B cell (primary cell): ENCODE measurements at regions of chr22 and their contacts with region 1.

Region 1: GRCh38 chr22:42090596-42091454 is at the start of gene NDUFA6:
- DNase-seq: peak; percentile 99
- ATAC-seq: peak; percentile 87
- H3K4me3 ChIP-seq: peak within 1 kb of the TSS; percentile 74 to 95 (median 91)
- H3K4me3 Mint-ChIP-seq: peak within 1 kb of the TSS; percentile 98
- H3K27ac ChIP-seq: peak within 1 kb of the TSS; percentile 89 to 96
- H3K27ac Mint-ChIP-seq: peak within 1 kb of the TSS; percentile 99
- H3K4me1 ChIP-seq: peaks cover 17 to 22% of the 10 kb centered on the region in 2 donors
- H3K4me1 Mint-ChIP-seq: peaks cover 31% of the 10 kb centered on the region
- H3K27me3 ChIP-seq: no peaks in the 10 kb centered on the region
- H3K27me3 Mint-ChIP-seq: no peaks in the 10 kb centered on the region
- CTCF ChIP-seq: peak; percentile 92
- total RNA-seq, gene NDUFA6: 47.8 and 51.5 TPM in 2 replicates

Region 2: DNA sequence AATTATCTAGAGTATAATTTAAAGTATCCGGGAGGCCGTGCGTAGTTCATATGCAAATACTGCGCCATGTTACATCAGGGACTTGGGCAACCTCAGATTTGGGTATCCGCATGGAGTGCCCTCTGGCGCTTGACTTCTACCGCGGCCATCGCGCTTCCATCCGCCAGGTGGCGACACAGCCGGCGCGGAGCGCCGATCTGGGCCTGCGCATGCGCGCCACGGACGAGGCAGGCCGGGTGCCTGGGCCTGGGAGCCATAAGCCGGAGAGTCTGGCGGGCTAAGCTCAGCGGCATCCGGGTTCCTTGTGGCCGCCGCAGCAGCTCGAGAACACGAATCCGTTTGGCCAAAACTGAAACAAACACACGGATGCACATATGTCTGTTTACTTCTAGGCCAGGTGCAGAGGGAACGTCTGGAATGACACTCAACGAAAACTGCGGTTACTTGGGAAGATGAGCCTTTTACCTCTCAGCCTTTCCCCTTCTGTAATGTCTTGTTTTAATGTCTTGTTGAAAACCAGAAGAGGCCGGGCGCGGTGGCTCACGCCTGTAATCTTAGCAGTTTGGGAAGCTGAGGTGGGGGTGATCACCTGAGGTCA is 424.1 kb before region 1 on chr22:
- CTCF ChIA-PET with region 1: no interaction called
- POLR2A ChIA-PET with region 1: no interaction called
- intact Hi-C with region 1: loop called (anchors 2 kb)
- DNase-seq: peak; percentile 95
- ATAC-seq: peak; percentile 96
- H3K4me3 ChIP-seq: peak overlapping the region in 4 of 5 experiments; percentile 24 to 64 (median 44)
- H3K4me3 Mint-ChIP-seq: peak overlapping the region; percentile 90
- H3K27ac ChIP-seq: peak overlapping the region; percentile 69 to 71
- H3K27ac Mint-ChIP-seq: peak overlapping the region; percentile 98
- H3K4me1 ChIP-seq: peaks cover 0 to 13% of the 10 kb centered on the region in 2 donors
- H3K4me1 Mint-ChIP-seq: peaks cover 7% of the 10 kb centered on the region
- H3K27me3 ChIP-seq: no peaks in the 10 kb centered on the region
- H3K27me3 Mint-ChIP-seq: no peaks in the 10 kb centered on the region
- CTCF ChIP-seq: peak; percentile 98

Region 3: DNA sequence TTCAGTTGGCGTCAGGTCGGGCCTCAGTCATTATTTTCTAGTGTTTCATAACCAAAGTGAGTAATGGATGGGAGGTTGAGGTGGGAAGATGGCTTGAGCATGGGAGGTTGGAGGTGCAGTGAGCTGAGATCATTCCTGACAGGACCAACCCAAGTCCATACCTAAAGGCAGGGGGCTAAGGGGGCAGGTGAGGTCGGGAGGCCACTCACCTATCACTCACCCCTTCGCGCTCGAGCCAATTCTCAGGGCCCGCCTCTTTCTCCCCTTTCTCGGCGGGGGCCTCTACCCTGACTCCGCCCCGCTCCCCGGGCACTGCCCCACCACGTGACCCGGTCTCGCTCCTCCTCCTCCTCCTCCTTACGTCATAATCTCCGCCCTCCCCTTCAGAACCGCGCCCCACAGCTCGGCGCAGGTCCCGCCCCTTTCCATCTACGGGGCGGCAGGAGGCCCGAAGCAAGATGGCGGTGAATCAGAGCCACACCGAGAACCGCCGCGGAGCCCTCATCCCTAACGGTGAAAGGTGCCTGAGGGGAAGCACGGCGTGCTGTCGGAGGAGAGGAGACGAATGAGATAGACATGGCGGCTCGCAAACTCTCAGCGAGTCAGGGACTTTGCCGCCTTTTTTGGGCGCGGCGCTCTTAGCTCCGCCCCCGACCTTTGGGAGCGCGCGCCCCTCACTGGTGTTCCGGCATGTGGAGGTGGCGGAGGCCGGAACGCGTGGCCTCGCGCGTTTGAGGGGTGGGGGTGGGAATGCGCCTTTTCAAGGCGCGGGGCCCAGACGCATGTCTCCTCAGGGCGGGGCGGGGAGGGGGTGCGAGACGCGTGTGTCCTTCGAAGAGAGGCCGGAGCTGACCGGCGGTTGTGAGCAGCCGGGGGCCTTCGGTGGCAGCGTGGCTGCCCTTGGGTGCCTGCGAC is 92.2 kb before region 1 on chr22 and contains the start of gene WBP2NL:
- CTCF ChIA-PET with region 1: interaction called, 6 read pairs
- POLR2A ChIA-PET with region 1: interaction called, 8 read pairs
- intact Hi-C with region 1: loop called (anchors 1 kb)
- DNase-seq: peak; percentile 95
- ATAC-seq: peak; percentile 100
- H3K4me3 ChIP-seq: peak within 1 kb of the TSS; percentile 36 to 88 (median 76)
- H3K4me3 Mint-ChIP-seq: peak within 1 kb of the TSS; percentile 99
- H3K27ac ChIP-seq: peak within 1 kb of the TSS; percentile 72 to 81
- H3K27ac Mint-ChIP-seq: peak within 1 kb of the TSS; percentile 99
- H3K4me1 ChIP-seq: peaks cover 15 to 23% of the 10 kb centered on the region in 2 donors
- H3K4me1 Mint-ChIP-seq: peaks cover 25% of the 10 kb centered on the region
- H3K27me3 ChIP-seq: peaks cover 0 to 10% (median 3%) of the 10 kb centered on the region in 4 experiments
- H3K27me3 Mint-ChIP-seq: no peaks in the 10 kb centered on the region
- CTCF ChIP-seq: no peak
- total RNA-seq, gene WBP2NL: 10.1 and 10.4 TPM in 2 replicates

Region 4: GRCh38 chr22:42114721-42115120 is 23.9 kb after region 1 on chr22:
- CTCF ChIA-PET with region 1: interaction called, 17 read pairs
- POLR2A ChIA-PET with region 1: no interaction called
- intact Hi-C with region 1: no loop called
- DNase-seq: no peak
- ATAC-seq: no peak
- H3K4me3 ChIP-seq: no peak overlapping the region
- H3K4me3 Mint-ChIP-seq: no peak overlapping the region
- H3K27ac ChIP-seq: no peak overlapping the region
- H3K27ac Mint-ChIP-seq: no peak overlapping the region
- H3K4me1 ChIP-seq: peaks cover 0 to under 1% of the 10 kb centered on the region in 2 donors
- H3K4me1 Mint-ChIP-seq: peaks cover 6% of the 10 kb centered on the region
- H3K27me3 ChIP-seq: no peaks in the 10 kb centered on the region
- H3K27me3 Mint-ChIP-seq: no peaks in the 10 kb centered on the region
- CTCF ChIP-seq: no peak

Region 5: GRCh38 chr22:42300259-42301076 is 209.6 kb after region 1 on chr22:
- CTCF ChIA-PET with region 1: no interaction called
- POLR2A ChIA-PET with region 1: no interaction called
- intact Hi-C with region 1: loop called (anchors 1 kb)
- DNase-seq: peak; percentile 79
- ATAC-seq: peak; percentile 91
- H3K4me3 ChIP-seq: peak overlapping the region in 4 of 5 experiments; percentile 46 to 61 (median 58)
- H3K4me3 Mint-ChIP-seq: peak overlapping the region; percentile 86
- H3K27ac ChIP-seq: peak overlapping the region; percentile 79 to 82
- H3K27ac Mint-ChIP-seq: peak overlapping the region; percentile 91
- H3K4me1 ChIP-seq: peaks cover 52 to 68% of the 10 kb centered on the region in 2 donors
- H3K4me1 Mint-ChIP-seq: peaks cover 51% of the 10 kb centered on the region
- H3K27me3 ChIP-seq: peaks cover 0 to 10% (median 2%) of the 10 kb centered on the region in 4 experiments
- H3K27me3 Mint-ChIP-seq: peaks cover 9% of the 10 kb centered on the region
- CTCF ChIP-seq: no peak

Region 6: GRCh38 chr22:42437488-42438292 is 346.9 kb after region 1 on chr22:
- CTCF ChIA-PET with region 1: interaction called, 57 read pairs
- POLR2A ChIA-PET with region 1: interaction called, 5 read pairs
- intact Hi-C with region 1: loop called (anchors 1 kb)
- DNase-seq: peak; percentile 90
- ATAC-seq: peak; percentile 88
- H3K4me3 ChIP-seq: peak overlapping the region; percentile 9 to 73 (median 49)
- H3K4me3 Mint-ChIP-seq: peak overlapping the region; percentile 86
- H3K27ac ChIP-seq: peak overlapping the region in 1 of 2 donors; percentile 69
- H3K27ac Mint-ChIP-seq: peak overlapping the region; percentile 79
- H3K4me1 ChIP-seq: peaks cover 36 to 46% of the 10 kb centered on the region in 2 donors
- H3K4me1 Mint-ChIP-seq: peaks cover 40% of the 10 kb centered on the region
- H3K27me3 ChIP-seq: peaks cover 0 to 58% (median 18%) of the 10 kb centered on the region in 4 experiments
- H3K27me3 Mint-ChIP-seq: peaks cover 41% of the 10 kb centered on the region
- CTCF ChIP-seq: peak; percentile 98

Region 7: DNA sequence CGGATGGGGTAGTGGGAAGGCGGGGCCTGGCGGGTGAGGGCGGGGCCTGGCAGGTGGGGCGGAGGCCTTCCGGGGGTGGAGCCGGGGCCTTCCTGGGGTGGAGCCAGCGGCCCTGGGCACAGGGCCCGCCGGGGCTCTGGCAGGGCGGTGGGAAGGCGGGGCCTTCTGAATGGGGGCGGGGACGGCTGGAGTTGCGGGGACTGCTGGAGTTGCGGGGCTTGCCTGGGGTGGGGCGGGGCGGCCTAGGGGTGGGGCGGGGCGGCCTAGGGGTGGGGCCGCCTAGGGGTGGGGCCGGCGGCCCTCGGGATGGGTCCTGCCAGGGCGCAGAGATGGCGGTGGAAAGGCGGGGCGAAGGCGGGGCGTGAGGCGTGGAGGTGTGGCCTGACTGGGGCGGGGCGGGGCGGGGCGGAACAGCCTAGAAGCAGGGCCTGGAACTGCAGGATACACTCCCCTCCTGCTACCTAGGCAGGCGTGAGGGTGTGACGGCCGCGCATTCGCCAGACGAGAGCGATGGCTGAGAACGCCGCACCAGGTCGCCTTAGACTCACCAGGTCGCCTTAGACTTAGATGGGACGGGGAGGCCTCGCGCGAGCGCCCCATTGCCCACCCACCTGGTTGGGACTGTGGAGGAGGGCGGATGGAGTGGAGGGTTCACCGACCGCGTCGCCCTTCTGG is 409.5 kb after region 1 on chr22:
- CTCF ChIA-PET with region 1: no interaction called
- POLR2A ChIA-PET with region 1: interaction called, 4 read pairs
- intact Hi-C with region 1: loop called (anchors 5 kb)
- DNase-seq: peak; percentile 91
- ATAC-seq: peak; percentile 89
- H3K4me3 ChIP-seq: peak overlapping the region in 4 of 5 experiments; percentile 41 to 60 (median 50)
- H3K4me3 Mint-ChIP-seq: peak overlapping the region; percentile 83
- H3K27ac ChIP-seq: no peak overlapping the region
- H3K27ac Mint-ChIP-seq: peak overlapping the region; percentile 37
- H3K4me1 ChIP-seq: peaks cover 12 to 14% of the 10 kb centered on the region in 2 donors
- H3K4me1 Mint-ChIP-seq: peaks cover 15% of the 10 kb centered on the region
- H3K27me3 ChIP-seq: no peaks in the 10 kb centered on the region
- H3K27me3 Mint-ChIP-seq: no peaks in the 10 kb centered on the region
- CTCF ChIP-seq: no peak